ENCODE measurements at regions of chr14 and their contacts with region 1.

Region 1: GRCh38 chr14:26598081-26598795 is 405 bp upstream of the NOVA1 start:
- DNase-seq: peak; percentile 92 to 96
- H3K4me3 ChIP-seq: peak overlapping the region; percentile 69
- H3K4me1 ChIP-seq: peaks cover 24% of the 10 kb centered on the region
- H3K27me3 ChIP-seq: no peaks in the 10 kb centered on the region

Region 2: GRCh38 chr14:26687301-26687837 is 89.1 kb after region 1 on chr14:
- in situ Hi-C with region 1: loop called (anchors 25 kb)
- DNase-seq: no peak
- H3K4me3 ChIP-seq: no peak overlapping the region
- H3K4me1 ChIP-seq: peaks cover 22% of the 10 kb centered on the region
- H3K27me3 ChIP-seq: no peaks in the 10 kb centered on the region

Region 3: GRCh38 chr14:27148143-27148542 is 549.9 kb after region 1 on chr14:
- in situ Hi-C with region 1: no loop called
- DNase-seq: no peak
- H3K4me3 ChIP-seq: no peak overlapping the region
- H3K4me1 ChIP-seq: no peaks in the 10 kb centered on the region
- H3K27me3 ChIP-seq: no peaks in the 10 kb centered on the region